GM12878 (cell line): ENCODE measurements at regions of chr12 and their contacts with region 1.

Region 1: DNA sequence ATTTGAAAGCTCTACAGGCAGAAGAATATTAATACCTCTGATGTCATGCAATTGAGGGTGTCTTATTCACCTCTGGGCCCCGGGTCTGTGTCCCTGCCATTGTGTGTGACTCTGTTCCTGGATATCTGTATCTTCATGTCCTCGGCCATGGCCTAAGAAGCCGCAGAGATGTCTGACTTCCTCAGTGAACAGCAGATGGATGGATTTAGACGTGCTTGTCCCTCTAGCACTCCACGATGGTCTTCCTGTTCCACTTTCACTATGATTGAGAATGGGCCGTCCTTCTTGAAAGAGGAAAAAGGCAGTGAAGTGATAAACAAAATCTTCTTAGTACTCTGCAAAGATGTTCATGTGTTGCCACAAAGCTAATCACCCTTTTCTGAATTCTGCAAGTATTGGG is 217.4 kb downstream of the SLC41A2 start:
- DNase-seq: peak; percentile 87
- ATAC-seq: peak; percentile 87
- H3K4me3 ChIP-seq: peak overlapping the region; percentile 45; the same call in 1 of the 2 replicates
- H3K27ac ChIP-seq: peak overlapping the region; percentile 82
- H3K4me1 ChIP-seq: peaks cover 63% of the 10 kb centered on the region
- H3K27me3 ChIP-seq: no peaks in the 10 kb centered on the region
- CTCF ChIP-seq: no peak
- EP300 ChIP-seq: peak in 1 of 2 experiments; percentile 12; a peak in 1 of 4 replicates
- POLR2A ChIP-seq: peak; percentile 66
- RAD21 ChIP-seq: no peak

Region 2: DNA sequence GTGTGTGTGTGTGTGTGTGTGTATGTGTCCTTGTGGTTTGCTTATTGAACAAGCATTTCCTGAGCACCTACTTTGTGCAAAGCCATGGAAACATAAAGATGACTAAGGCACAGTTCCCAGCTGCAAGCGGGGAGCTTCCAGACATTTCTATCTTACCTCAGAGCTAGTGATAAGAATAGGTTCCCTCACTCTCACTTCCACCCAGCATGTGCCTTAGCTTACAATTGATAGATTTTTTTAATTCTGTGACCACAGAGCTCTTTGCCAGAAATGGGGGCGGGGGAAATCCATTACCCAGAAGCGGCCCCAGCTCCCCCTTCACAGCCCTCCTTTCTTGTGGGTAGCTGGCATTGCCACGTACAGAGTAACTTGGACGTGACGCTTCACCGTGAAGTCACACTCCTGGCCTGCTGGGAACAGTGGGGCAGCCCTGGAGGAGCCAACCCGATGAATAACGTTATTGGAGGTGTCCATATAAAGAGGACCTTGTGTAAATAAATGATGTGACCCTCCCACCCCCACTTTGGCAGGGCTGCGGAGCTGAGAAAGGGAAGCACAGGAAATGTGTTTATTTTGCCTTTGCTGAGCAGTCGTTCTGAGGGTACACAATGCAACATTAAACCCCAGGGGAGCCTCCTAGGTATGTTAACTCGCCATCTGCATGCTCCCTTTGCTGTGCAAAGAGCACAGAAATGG is 45.1 kb before region 1 on chr12:
- CTCF ChIA-PET with region 1: no interaction called
- POLR2A ChIA-PET with region 1: interaction called, 8 read pairs
- RAD21 ChIA-PET with region 1: interaction called, 4 read pairs
- SMC1A ChIA-PET with region 1: interaction called, 11 read pairs
- in situ Hi-C with region 1: no loop called
- intact Hi-C with region 1: no loop called
- DNase-seq: peak; percentile 73
- ATAC-seq: peak; percentile 75
- H3K4me3 ChIP-seq: no peak overlapping the region
- H3K27ac ChIP-seq: peak overlapping the region; percentile 58
- H3K4me1 ChIP-seq: peaks cover 42% of the 10 kb centered on the region
- H3K27me3 ChIP-seq: no peaks in the 10 kb centered on the region
- CTCF ChIP-seq: no peak
- EP300 ChIP-seq: peak; percentile 76 to 78; a peak in 3 of 4 replicates
- POLR2A ChIP-seq: no peak
- RAD21 ChIP-seq: no peak

Region 3: DNA sequence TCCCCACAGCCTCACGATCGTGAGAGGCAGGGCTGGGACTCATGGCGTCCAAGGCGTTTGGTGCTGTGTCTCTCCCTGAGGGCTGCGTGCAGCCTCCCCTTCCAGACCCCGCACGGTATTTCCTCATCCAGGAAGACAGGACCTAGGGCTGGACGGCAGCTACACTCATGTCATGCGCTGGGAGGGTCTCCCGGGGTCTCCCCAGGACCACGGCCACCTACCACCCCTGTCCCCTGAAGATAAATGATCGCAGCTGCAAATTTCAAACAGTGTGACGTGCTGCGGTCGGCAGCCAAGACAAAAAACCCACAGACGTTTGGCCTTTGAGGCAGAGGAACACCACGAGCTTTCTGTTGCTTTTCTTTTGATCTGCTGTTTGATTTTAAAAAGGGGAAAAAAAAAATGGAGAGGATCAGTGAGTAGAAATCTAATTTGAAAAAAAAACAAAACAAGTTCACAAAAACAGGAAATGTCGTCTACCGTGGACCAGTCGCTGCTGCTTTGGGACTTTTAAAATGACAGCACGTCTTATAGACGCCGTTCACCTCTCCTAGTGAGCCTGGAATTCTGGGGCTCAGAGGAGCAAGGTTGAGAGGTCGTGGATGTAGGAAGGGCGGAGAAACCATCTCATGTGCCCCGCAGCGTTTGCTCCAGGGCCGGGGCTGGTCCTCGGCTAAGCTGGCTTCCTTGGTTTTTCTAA is 20.2 kb before region 1 on chr12:
- CTCF ChIA-PET with region 1: no interaction called
- POLR2A ChIA-PET with region 1: no interaction called
- RAD21 ChIA-PET with region 1: interaction called, 3 read pairs
- SMC1A ChIA-PET with region 1: interaction called, 15 read pairs
- in situ Hi-C with region 1: no loop called
- intact Hi-C with region 1: no loop called
- DNase-seq: no peak
- ATAC-seq: peak; percentile 71
- H3K4me3 ChIP-seq: peak overlapping the region; percentile 40
- H3K27ac ChIP-seq: peak overlapping the region; percentile 92
- H3K4me1 ChIP-seq: peaks cover 35% of the 10 kb centered on the region
- H3K27me3 ChIP-seq: no peaks in the 10 kb centered on the region; a peak in 1 of 4 replicates
- CTCF ChIP-seq: no peak
- EP300 ChIP-seq: peak; percentile 54 to 68; a peak in 2 of 4 replicates
- POLR2A ChIP-seq: peak; percentile 56; the same call in 1 of the 2 replicates
- RAD21 ChIP-seq: no peak

Region 4: DNA sequence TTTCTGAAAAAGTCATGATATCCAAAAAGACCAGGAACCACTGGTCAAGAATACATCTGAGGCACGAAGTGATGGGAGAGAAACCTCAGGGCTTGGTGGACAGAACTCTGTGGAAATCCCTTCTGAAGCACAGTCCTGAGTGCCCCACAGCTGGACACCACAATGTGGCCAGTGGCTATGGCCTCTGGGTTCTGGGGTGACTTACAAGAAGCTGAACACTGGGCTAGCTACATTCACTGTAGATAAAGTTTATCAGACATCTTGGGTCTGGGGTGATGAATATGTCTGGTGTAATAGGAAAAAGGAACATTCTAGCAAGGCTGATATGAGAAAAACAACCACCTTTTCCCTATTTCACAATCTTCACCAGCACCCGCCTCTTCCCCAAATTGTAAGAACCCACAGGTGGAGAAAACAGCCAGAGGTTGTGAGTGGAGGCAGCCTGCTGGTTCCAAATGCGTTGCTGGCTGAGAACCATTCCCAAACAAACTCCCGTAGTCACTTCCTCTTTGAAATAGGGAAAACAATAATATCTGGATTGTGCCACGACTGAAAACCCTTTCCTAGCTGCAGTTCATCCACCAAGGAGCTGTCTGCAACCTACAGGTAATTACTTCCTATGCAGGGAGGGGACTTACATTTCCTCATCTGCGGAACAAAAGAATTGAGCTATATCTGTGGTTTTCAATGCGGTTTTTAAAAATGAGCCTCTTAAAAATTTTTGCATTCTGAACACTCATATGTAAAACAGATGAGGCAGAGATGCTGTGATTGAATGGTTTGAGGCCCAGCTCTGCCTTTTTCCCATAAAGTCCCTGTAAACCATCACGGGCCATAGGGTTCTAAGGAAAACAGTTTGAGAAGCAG is 23.8 kb after region 1 on chr12:
- CTCF ChIA-PET with region 1: no interaction called
- POLR2A ChIA-PET with region 1: interaction called, 7 read pairs
- RAD21 ChIA-PET with region 1: interaction called, 10 read pairs
- SMC1A ChIA-PET with region 1: interaction called, 14 read pairs
- in situ Hi-C with region 1: no loop called
- intact Hi-C with region 1: no loop called
- DNase-seq: peak; percentile 36
- ATAC-seq: peak; percentile 60
- H3K4me3 ChIP-seq: no peak overlapping the region
- H3K27ac ChIP-seq: no peak overlapping the region
- H3K4me1 ChIP-seq: peaks cover 13% of the 10 kb centered on the region
- H3K27me3 ChIP-seq: no peaks in the 10 kb centered on the region
- CTCF ChIP-seq: no peak
- EP300 ChIP-seq: no peak
- POLR2A ChIP-seq: no peak
- RAD21 ChIP-seq: no peak